PC-9 (cell line): ENCODE measurements at regions of chr19 and their contacts with region 1.

Region 1: DNA sequence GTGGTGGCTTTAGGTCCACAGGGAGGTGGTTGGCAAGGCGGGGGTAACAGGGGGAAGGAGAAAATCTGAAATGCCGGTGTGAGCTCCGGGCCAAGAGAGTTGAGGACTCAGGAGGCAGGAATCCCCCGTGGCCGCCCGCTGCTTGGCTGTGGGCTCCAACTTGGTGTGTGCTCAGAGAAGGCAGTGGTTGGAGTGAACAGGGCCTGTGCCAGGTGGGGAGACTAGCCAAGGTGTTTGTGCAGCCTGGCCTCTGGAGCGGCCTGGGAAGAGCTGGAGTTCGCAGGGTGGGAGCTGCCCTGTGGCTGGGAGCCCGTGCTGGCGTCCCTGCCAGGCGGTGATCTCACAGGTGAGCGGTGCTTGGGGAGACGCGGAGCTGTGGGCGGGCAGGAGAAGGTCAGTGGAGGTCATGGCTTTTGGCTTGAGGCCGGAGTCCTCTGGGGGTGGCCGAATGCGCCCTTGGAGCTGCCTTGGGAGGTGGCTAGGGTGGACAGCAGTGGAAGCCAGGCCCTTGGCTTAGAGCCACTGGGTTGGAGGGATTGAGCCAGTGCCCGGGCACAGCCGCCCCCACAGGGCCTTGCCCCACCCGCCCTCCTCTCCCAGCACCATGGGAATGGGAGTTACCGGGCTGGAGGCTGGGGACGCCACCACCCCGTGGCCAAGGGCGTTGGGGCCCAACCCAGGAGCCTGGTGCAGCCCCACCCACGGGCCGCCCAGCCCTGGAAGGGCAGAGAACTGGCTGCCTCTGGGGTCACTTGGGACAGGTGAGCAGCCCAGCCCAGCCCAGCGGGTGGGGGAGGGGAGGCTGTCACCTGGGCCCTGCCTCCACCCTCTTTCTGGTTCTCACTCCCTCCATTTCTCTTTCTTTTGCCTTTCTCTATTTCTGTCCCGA is 7.1 kb upstream of the CIRBP start:
- DNase-seq: peak; percentile 79 to 96
- H3K4me3 ChIP-seq: peak overlapping the region; percentile 94
- H3K27ac ChIP-seq: peak overlapping the region; percentile 90
- H3K4me1 ChIP-seq: peaks cover 61% of the 10 kb centered on the region
- H3K27me3 ChIP-seq: no peaks in the 10 kb centered on the region
- CTCF ChIP-seq: no peak

Region 2: GRCh38 chr19:1189419-1189818 is 72.6 kb before region 1 on chr19:
- CTCF ChIA-PET with region 1: no interaction called
- POLR2A ChIA-PET with region 1: no interaction called
- intact Hi-C with region 1: no loop called
- DNase-seq: peak; percentile 44 to 50
- H3K4me3 ChIP-seq: no peak overlapping the region
- H3K27ac ChIP-seq: peak overlapping the region; percentile 57; the same call in 1 of the 2 replicates
- H3K4me1 ChIP-seq: peaks cover 26% of the 10 kb centered on the region
- H3K27me3 ChIP-seq: no peaks in the 10 kb centered on the region
- CTCF ChIP-seq: no peak

Region 3: GRCh38 chr19:1249298-1249989 is 12.6 kb before region 1 on chr19:
- CTCF ChIA-PET with region 1: interaction called, 76 read pairs
- POLR2A ChIA-PET with region 1: interaction called, 33 read pairs
- intact Hi-C with region 1: loop called (anchors 1 kb)
- DNase-seq: peak; percentile 70 to 90
- H3K4me3 ChIP-seq: peak overlapping the region; percentile 61; the same call in 1 of the 2 replicates
- H3K27ac ChIP-seq: peak overlapping the region; percentile 84
- H3K4me1 ChIP-seq: peaks cover 22% of the 10 kb centered on the region
- H3K27me3 ChIP-seq: no peaks in the 10 kb centered on the region
- CTCF ChIP-seq: no peak